Activated CD4-positive, alpha-beta T cell treated with anti-CD3 and anti-CD28 coated beads for 36 hours (primary cell): ENCODE measurements at regions of chr18 and their contacts with region 1.

Region 1: GRCh38 chr18:9474983-9475642 is at the start of gene RALBP1:
- DNase-seq: peak; percentile 99
- ATAC-seq: peak; percentile 98
- H3K4me3 Mint-ChIP-seq: peak within 1 kb of the TSS; percentile 85
- H3K27ac Mint-ChIP-seq: peak within 1 kb of the TSS; percentile 92
- H3K4me1 Mint-ChIP-seq: peaks cover 16% of the 10 kb centered on the region
- H3K27me3 Mint-ChIP-seq: peaks cover 8% of the 10 kb centered on the region
- total RNA-seq, gene RALBP1: 49.4 to 51.1 TPM

Region 2: DNA sequence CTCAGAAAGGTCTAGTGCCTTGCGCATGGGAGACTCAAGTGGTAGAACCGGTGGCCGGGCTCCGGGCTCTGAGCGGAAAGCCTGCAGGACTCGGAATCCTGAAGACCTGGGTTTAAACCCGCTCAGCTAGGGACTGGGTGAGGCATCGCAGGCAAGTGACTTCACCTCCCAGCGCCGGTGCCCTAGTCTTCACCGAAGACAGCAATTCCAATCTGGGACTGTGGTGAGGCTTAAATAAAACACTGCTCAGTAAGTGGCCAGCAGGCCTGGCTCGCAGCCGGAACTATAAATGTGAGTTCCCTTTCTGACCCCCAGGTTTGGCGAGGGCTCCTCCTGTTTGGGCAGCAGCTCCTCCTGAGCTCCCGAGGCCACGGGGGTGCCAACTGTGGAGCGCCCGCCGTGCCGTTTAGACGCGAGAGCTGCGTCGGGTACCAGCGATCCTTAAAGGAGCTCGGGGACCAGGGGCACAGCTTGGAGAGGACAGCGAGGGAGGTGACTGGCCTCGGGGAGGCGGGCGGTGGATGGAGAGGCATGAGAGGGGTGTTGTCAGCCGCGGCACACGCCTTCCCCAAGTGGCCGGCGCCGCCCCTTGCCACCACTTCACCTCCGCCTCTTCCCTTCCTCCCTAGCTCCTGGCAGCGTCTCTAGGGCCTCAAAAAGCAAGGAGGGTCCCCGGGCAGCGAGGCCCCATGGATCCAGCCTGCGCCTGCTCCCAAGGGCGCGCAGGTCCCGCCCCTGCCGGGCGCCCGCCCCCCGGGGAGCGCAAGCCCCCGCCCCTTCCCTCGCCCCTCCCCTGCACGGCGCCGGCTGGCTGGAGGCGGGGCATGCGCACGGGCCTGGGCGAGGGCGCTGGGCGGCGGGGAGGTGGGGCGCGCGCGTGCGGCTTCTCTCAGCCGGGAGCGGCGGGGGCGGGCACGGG is 770.5 kb before region 1 on chr18:
- CTCF ChIA-PET with region 1: no interaction called
- POLR2A ChIA-PET with region 1: no interaction called
- intact Hi-C with region 1: loop called in 1 of 2 experiments (anchors 1 kb)
- DNase-seq: peak; percentile 90
- ATAC-seq: peak; percentile 98
- H3K4me3 Mint-ChIP-seq: peak overlapping the region; percentile 80
- H3K27ac Mint-ChIP-seq: no peak overlapping the region
- H3K4me1 Mint-ChIP-seq: peaks cover 12% of the 10 kb centered on the region
- H3K27me3 Mint-ChIP-seq: peaks cover 47% of the 10 kb centered on the region

Region 3: DNA sequence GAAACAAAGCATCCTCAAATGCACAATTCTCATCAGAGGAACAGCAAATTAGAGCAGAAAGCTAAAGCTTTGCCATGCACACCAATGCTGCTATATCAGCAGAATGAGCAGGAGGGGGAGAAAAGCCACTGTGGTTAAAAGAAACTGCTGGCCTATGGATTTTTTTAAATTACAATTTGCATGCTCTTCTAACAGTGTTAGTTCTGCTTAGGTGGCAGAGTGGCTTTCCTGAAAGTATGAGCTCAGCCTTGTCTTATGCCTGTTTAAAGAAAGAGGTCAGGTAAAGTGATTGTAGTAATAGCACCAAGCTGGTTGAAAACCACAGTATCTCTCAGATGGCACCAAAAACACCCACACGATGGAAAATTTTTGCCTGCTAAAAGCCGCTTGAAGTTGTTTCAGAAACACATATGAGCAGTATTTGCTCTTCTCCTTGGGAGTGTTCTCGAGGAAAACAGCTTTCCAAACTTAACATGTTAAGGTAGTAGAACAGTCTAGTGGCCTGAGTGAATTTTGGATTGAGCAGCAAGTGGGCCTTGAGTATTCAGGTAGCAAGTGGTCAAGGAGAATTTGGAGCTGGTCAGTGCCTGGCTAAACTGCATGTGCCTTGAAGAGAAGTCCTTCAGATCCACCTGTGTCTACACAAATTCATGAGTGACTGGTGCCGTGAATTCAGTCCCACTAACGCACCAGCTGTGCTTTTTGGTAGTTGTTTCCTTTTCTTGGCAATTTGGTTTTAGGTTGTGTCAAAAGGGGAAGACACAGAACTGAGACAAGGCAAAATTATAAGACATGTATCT is 392.2 kb before region 1 on chr18:
- CTCF ChIA-PET with region 1: interaction called, 3 read pairs
- POLR2A ChIA-PET with region 1: no interaction called
- intact Hi-C with region 1: loop called in 1 of 2 experiments (anchors 5 kb)
- DNase-seq: peak; percentile 80
- ATAC-seq: peak; percentile 91
- H3K4me3 Mint-ChIP-seq: peak overlapping the region; percentile 62
- H3K27ac Mint-ChIP-seq: peak overlapping the region; percentile 96
- H3K4me1 Mint-ChIP-seq: peaks cover 41% of the 10 kb centered on the region
- H3K27me3 Mint-ChIP-seq: no peaks in the 10 kb centered on the region

Region 4: DNA sequence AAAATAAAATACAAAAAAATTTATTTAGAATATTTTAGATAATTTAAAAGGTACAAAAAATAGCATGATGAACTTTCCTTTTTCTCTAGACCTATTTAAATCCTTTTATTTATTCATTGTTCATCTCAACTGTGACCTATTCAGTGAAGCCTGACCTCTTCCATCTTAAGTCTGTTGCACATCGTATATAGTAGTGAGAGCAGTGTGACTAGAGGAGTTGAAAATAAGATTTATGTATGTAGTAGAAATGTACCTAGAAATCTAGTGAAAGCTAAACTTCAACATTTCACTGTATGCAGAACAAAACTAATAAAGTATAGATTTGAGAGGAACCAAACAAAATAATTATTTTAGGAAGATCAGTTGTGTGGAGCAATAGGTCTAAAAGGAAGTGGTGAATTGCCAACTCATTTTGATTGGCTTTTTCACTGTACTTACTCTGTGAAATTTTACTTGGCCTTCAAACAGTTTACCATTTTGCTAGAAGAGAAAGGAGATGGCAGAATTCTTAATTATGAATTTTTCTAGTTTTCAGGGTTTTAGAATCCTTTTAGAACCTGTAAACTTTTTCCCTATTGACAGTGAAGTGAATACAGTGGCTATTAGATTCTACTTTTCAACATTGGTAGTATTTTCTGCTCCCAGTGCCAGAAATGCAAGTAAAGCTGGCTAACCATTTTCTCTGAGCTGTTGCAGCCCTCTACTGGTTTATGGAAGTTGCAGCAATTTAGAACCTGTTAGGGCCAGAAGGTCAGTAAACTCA is 327.5 kb before region 1 on chr18:
- CTCF ChIA-PET with region 1: no interaction called
- POLR2A ChIA-PET with region 1: no interaction called
- intact Hi-C with region 1: loop called in 1 of 2 experiments (anchors 10 kb)
- DNase-seq: peak; percentile 33
- ATAC-seq: peak; percentile 59
- H3K4me3 Mint-ChIP-seq: peak overlapping the region; percentile 49
- H3K27ac Mint-ChIP-seq: peak overlapping the region; percentile 93
- H3K4me1 Mint-ChIP-seq: peaks cover 77% of the 10 kb centered on the region
- H3K27me3 Mint-ChIP-seq: no peaks in the 10 kb centered on the region

Region 5: DNA sequence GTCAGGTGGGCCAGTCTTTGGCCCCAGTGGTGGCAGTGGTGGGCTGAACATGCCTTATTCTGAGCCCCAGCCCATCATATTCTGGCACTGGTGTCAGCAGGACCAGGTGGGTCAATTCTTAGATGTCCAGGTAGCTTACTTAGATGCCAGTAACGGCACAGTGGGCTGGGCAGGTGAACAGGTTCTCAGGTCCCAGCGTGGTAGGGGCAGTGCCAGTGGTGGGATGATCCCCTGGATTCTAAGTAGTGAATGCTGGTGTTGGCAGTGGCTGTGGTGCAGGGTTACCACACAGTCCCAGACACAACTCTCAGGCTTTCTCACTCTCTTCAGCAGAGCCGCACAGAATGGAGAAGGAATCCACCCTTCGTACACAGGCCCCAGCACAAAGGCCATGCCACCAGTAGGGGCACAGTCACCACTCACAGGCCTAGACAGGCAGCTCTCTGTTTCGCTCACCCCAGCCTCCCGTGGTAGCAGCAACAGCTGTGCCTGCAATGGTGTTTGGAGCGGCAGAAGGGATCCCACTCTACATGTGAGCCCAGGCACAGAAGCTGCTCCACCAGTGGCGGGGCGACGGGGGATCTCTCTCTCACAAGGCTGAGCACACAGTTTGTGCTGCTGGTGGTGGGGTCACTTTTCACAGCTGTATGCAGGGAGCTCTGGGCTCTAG is 241.2 kb before region 1 on chr18:
- CTCF ChIA-PET with region 1: no interaction called
- POLR2A ChIA-PET with region 1: no interaction called
- intact Hi-C with region 1: no loop called
- DNase-seq: no peak
- ATAC-seq: no peak
- H3K4me3 Mint-ChIP-seq: no peak overlapping the region
- H3K27ac Mint-ChIP-seq: no peak overlapping the region
- H3K4me1 Mint-ChIP-seq: peaks cover 9% of the 10 kb centered on the region
- H3K27me3 Mint-ChIP-seq: no peaks in the 10 kb centered on the region

Region 6: DNA sequence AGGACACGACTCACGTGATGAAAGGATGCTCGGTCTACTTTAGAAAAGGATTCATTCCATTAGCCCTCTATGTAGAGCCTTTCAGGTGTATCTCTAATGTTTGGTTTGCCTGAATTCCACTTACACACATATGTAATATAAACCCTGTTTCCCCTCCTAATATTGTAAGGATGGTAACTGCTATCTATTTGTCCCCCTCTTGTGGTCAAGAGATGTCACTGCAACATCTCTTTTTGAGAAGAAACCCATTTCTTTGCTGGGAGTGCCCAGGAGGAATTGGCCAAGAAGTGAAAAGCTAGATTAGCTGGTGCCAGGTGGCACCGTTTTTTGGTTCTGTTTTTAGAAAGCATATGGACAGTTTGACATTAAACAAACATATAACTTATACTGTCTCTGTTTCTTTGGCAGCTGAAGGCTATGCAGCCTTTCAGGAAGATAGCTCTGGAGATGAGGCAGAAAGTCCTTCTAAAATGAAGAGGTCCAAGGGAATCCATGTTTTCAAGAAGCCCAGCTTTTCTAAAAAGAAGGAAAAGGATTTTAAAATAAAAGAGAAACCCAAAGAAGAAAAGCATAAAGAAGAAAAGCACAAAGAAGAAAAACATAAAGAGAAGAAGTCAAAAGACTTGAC is 41.4 kb after region 1 on chr18:
- CTCF ChIA-PET with region 1: interaction called, 7 read pairs
- POLR2A ChIA-PET with region 1: no interaction called
- intact Hi-C with region 1: loop called (anchors 1 to 5 kb)
- DNase-seq: peak; percentile 10
- ATAC-seq: peak; percentile 47
- H3K4me3 Mint-ChIP-seq: no peak overlapping the region
- H3K27ac Mint-ChIP-seq: no peak overlapping the region
- H3K4me1 Mint-ChIP-seq: peaks cover 2% of the 10 kb centered on the region
- H3K27me3 Mint-ChIP-seq: no peaks in the 10 kb centered on the region

Region 7: DNA sequence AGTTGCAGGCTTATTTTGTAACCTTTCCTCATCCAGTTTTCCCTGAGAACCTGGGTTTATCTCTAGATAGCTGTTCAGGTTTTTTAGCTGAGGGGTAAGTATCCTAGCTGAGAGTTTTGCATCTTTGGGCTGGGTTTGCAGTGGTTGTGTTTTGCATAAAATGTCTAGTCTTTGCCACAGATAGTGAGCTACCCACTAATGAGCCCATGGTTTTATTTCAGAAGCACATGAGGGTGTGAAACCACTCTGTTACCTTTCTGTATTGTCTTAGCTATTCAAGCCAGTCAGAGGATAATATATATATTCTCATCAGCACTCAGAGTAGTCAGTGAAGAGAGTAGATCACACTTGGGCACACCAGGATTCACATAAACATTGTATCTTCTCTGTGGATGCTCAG is 386.0 kb after region 1 on chr18:
- CTCF ChIA-PET with region 1: no interaction called
- POLR2A ChIA-PET with region 1: no interaction called
- intact Hi-C with region 1: no loop called
- DNase-seq: no peak
- ATAC-seq: peak; percentile 19
- H3K4me3 Mint-ChIP-seq: no peak overlapping the region
- H3K27ac Mint-ChIP-seq: no peak overlapping the region
- H3K4me1 Mint-ChIP-seq: peaks cover 6% of the 10 kb centered on the region
- H3K27me3 Mint-ChIP-seq: peaks cover 6% of the 10 kb centered on the region

Region 8: GRCh38 chr18:10525371-10526210 is 1050.5 kb after region 1 on chr18 and contains the start of gene NAPG:
- CTCF ChIA-PET with region 1: no interaction called
- POLR2A ChIA-PET with region 1: no interaction called
- intact Hi-C with region 1: loop called in 1 of 2 experiments (anchors 5 kb)
- DNase-seq: peak; percentile 94
- ATAC-seq: peak; percentile 84
- H3K4me3 Mint-ChIP-seq: peak within 1 kb of the TSS; percentile 92
- H3K27ac Mint-ChIP-seq: peak within 1 kb of the TSS; percentile 96
- H3K4me1 Mint-ChIP-seq: peaks cover 49% of the 10 kb centered on the region
- H3K27me3 Mint-ChIP-seq: peaks cover 4% of the 10 kb centered on the region
- total RNA-seq, gene NAPG: 28.6 to 31.0 TPM